Right ventricle myocardium inferior (tissue), 1 donor: ENCODE measurements at regions of chr11 and their contacts with region 1.

Region 1: DNA sequence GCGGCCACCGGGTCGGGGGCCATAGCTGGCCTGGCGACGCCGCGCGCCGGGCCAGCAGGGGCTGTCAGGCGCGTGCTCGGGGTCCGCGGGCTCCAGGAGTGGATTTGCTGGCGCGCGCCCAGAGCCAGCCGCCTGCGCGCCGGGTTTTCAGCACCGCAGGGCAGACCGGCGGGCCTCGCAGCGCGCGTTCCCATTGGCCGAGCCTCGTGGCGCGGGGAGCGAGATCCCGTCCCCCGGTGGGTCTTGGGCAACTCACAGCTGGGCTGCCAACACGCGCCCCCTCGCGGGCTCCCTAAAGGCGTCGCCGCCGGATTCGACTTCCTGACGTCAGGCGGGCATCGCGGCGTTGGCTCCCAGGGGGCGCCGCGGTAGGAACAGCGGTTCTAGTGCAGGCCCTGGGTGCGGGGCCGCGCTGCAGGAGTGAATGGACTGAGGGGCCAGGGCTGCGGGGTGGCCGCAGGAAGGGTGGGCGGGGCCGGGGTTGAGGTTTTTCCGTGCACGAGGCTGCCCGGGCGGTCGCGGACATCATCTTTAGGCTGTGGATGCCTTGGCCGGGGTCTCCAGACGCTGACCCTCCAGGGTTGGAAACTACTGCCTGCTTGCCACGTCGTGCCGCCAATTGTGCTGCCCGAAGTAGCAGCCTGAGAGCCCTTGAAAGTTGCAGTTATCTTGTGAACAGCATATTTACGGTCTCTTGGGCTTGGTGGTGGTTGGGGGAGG is at the start of gene FADS1:
- DNase-seq: peak; percentile 95
- ATAC-seq: peak; percentile 53
- total RNA-seq, gene FADS1: 25.7 TPM

Region 2: DNA sequence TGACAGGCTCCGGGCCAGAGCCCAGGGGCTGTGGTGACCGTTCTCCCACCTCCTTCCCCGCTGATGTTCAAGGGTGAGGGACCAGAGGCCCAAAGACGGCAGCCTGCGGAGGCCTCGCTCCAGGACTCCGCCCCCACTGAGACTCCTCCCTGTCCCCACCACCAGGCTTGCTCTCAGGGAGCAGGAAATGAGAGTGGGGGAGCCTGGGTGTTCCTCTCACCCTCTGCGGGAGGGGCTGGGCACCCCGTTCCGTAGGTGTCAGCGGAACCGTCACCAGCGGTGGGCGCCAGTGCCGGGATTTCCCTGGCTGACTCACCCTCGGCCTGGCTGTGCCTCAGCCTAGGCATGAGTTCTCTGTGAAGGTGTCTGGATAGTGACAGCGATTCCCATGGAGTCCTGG is 121.0 kb before region 1 on chr11:
- intact Hi-C with region 1: no loop called
- DNase-seq: peak; percentile 80
- ATAC-seq: peak; percentile 73

Region 3: DNA sequence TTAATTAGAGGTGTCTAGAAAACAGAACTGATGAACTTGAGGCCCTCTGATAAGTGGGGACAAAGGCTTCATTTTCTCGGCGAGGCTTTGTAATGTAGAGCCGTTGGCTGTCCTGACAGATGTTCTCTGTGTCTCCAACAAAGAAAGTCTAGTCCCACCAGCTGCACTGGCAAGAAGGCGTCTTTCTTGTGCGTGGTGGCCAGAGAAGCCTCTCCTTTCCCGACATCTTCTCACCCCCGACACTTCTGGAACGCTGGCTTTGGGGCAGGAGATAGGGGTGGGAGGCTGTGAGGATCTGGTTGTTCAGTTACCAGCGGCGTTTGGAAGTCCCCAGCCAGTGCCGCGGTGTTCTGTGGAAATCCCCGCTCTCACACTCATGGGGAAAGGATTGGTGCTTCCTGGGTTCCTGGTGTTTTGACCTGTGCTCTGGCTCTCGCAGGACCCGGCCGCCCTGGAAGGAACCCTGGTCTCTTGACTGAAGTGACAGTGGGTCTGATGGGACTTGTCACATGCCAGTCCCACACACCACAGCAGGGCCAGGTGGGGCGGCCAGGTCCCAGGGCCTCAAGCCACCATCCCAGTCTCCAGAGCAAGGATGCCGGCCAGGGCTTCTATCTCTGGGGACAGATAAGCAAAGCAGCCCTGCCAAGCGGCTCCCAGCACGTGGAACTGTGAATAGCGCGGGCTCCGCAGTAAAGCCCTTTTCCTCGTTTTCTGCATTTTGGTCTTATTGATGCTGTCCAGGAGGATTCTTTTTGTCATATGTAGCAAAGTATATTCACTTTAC is 34.4 kb after region 1 on chr11:
- intact Hi-C with region 1: loop called (anchors 5 kb)
- DNase-seq: peak; percentile 88
- ATAC-seq: peak; percentile 90

Region 4: GRCh38 chr11:61891331-61892084 is 74.6 kb after region 1 on chr11 and contains the start of gene FADS3:
- intact Hi-C with region 1: loop called (anchors 5 kb)
- DNase-seq: peak; percentile 94
- ATAC-seq: peak; percentile 90
- total RNA-seq, gene FADS3: 113 TPM

Region 5: GRCh38 chr11:61967116-61967923 is 150.4 kb after region 1 on chr11 and contains the start of gene FTH1:
- intact Hi-C with region 1: loop called (anchors 5 kb)
- DNase-seq: peak; percentile 96
- ATAC-seq: peak; percentile 85
- total RNA-seq, gene FTH1: 2,493 TPM

Region 6: DNA sequence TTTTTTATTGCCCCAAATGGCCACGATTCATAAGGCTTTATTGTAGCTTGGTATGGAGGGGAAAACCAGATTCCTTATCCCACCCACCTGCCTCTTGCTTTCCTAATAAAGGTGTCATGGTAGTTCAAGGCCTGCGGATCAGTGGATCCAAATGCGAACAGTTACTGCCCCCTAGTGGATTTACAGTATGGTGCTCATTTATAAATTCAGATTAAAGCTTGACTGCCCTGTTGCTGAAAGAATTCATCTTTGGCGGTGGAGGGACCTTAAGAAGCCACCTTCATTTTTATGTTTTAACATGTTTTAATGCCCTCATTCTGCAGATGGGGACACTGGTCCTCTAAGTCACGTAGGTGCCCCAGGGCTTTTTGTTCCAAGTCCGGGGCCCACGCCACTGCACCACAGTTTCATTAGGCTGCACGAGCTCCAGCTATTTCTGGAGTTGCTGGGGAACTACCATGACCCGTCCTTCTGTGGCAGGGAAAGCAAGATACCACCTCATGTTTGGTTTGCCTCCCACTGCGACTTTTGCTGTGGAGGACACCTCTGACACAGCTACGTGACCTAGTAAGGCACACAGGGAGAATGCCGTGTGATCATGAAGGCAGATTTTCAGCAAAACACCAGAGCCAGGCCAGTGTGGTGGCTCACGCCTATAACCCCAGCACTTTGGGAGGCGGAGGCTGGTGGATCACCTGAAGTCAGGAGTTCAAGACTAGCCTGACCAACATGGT is 291.3 kb after region 1 on chr11:
- intact Hi-C with region 1: loop called (anchors 5 kb)
- DNase-seq: no peak
- ATAC-seq: peak; percentile 37